ENCODE measurements at regions of chr10 and their contacts with region 1.

Region 1: DNA sequence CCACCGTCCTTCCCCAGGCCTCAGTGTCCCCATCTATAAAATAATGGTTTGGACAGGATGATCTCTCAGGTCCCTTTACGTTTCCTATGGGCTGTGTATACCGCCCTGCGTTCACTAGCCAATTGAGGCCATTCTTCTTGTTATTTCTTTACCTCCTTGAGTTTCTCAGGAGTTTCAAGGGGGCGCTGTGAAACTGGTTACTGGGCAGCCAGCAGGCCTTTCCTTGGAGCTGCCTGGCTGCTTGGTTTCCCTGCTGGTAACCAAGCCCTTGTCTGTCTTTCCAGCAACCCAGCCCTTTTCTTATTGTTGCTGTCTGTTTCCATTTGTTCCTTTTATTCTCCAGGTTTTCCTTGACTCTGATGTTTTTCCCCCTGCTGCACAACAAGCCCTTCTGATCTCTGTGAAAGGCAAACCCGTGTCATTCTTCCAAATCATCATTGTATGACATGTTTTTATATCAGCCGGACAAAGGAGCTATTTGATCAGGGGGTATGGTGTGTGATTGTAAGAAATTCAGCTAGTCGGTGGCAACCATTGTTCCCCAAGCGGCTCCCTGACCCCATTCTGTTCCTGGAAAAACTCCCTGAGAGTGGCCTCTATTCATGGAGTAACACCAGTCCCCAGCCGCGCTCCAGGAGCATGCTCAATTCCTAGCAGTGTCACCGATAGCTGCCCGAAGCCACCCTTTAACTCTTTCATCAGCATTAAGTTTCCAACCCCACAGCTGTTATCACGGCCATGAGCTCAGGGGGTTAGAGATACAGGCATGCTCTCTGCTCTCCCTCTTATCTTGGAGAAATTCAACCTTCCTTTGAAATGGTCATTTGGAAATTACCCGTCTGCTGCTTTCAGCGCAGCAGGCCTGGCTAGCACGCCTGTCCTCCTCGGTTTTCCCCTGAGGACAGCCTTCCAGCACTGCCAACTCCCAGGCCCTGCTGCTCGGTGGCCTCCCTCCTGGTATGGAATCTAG is 26.6 kb downstream of the FGF8 start:
- DNase-seq: no peak
- ATAC-seq: no peak
- H3K4me3 ChIP-seq: no peak overlapping the region
- H3K27ac ChIP-seq: no peak overlapping the region
- H3K4me1 ChIP-seq: no peaks in the 10 kb centered on the region
- H3K27me3 ChIP-seq: peaks cover 43% of the 10 kb centered on the region
- CTCF ChIP-seq: no peak
- POLR2A ChIP-seq: no peak
- RAD21 ChIP-seq: no peak

Region 2: DNA sequence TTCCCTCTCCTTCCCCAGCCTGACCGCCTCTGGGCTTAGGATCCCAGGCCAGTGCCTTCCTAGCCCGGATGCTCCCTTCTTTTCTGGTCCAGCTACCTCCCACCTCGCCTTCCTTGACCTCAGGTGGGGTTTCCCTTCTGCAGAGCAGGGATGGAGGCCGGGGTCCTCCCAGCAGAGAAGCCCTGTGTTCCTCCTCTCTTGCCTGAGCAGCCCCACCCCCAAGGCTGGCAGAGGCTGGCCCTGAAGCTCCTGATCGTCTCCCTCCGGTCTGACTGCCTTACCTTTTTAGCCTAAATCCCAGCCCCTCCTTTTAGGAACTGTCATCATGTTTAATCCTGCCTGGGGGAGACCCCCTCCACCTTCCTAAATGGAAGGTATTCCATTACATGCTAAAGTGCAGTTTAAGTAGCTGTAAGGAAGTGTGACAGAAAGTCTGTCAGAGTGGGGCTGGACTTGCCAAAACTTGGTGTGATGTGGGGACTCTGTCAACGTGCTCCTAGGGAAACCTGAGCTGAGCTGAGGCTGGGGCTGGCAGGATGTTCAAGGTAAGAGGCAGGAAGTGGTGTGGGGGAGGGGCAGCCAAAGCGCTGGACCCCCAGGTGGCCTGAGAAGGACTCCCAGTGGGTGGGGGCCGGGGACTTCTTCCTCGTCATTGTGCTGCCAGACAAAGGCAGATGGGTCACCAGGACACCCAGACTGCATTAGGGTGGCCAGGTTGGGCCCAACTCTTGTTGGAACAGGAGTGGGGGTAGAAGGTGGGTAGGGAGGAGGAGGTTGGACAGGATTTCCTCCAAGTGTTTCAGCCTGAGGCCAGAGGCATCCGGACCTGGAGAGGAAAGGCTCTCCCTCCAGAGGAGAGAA is 559.6 kb before region 1 on chr10:
- CTCF ChIA-PET with region 1: no interaction called
- POLR2A ChIA-PET with region 1: no interaction called
- dilution Hi-C with region 1: no loop called
- in situ Hi-C with region 1: loop called (anchors 10 kb)
- intact Hi-C with region 1: no loop called
- DNase-seq: no peak
- ATAC-seq: no peak
- H3K4me3 ChIP-seq: no peak overlapping the region
- H3K27ac ChIP-seq: no peak overlapping the region
- H3K4me1 ChIP-seq: no peaks in the 10 kb centered on the region
- H3K27me3 ChIP-seq: peaks cover 31% of the 10 kb centered on the region
- CTCF ChIP-seq: no peak
- POLR2A ChIP-seq: no peak
- RAD21 ChIP-seq: no peak

Region 3: DNA sequence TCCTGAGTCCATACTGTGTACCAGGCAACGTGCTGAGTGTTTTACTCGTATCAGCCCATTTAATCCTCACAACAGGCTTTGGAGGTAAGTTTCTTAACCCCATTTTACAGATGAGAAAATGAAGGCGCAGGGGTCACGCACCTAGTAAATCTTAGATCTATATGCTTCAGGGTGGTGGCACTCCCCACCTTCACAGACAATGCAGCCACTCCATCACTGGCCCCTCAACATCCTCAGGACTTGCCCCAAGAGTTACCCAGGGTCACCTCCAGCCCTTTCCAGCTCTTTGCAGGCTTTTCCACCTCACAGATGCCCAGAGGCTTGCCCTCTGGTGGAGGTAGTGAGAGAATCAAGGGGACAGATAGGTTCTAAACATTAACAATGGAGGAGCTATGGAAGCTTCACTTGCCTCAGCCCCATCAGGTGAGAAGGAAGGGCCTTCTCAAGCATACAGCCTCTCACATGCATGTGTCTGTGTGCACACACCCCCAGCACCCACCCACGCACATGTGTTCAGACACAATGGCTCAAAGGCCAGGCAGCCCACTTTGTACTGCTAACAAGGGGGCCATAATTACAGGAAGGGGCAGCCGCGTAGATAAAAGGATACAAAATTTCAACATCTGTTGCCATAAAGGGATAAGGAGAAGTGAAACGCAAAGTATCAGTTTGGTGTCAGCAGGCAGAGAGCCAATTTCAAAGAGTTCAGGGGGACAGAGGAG is 132.1 kb before region 1 on chr10:
- CTCF ChIA-PET with region 1: no interaction called
- POLR2A ChIA-PET with region 1: no interaction called
- dilution Hi-C with region 1: no loop called
- in situ Hi-C with region 1: no loop called
- intact Hi-C with region 1: no loop called
- DNase-seq: no peak
- ATAC-seq: no peak
- H3K4me3 ChIP-seq: no peak overlapping the region
- H3K27ac ChIP-seq: no peak overlapping the region
- H3K4me1 ChIP-seq: no peaks in the 10 kb centered on the region
- H3K27me3 ChIP-seq: no peaks in the 10 kb centered on the region
- CTCF ChIP-seq: no peak
- POLR2A ChIP-seq: no peak
- RAD21 ChIP-seq: no peak

Region 4: GRCh38 chr10:101879456-101880231 is 130.3 kb after region 1 on chr10:
- CTCF ChIA-PET with region 1: no interaction called
- POLR2A ChIA-PET with region 1: no interaction called
- dilution Hi-C with region 1: no loop called
- in situ Hi-C with region 1: no loop called
- intact Hi-C with region 1: no loop called
- DNase-seq: peak; percentile 97
- ATAC-seq: peak; percentile 79
- H3K4me3 ChIP-seq: no peak overlapping the region
- H3K27ac ChIP-seq: peak overlapping the region; percentile 81
- H3K4me1 ChIP-seq: peaks cover 13% of the 10 kb centered on the region
- H3K27me3 ChIP-seq: no peaks in the 10 kb centered on the region
- CTCF ChIP-seq: no peak
- POLR2A ChIP-seq: no peak
- RAD21 ChIP-seq: no peak

Measured in IMR-90 (cell line).